Activated CD4-positive, alpha-beta T cell treated with anti-CD3 and anti-CD28 coated beads, Interleukin-2, amount 10 ng/mL, durations not matched to agents 24 days and 14 days (primary cell): ENCODE measurements at regions of chr14 and their contacts with region 1.

Region 1: GRCh38 chr14:89681086-89682018 is 264.3 kb upstream of the FOXN3 start:
- DNase-seq: peak; percentile 78
- H3K4me3 Mint-ChIP-seq: peak overlapping the region; percentile 80
- H3K27ac Mint-ChIP-seq: peak overlapping the region; percentile 90
- H3K4me1 Mint-ChIP-seq: peaks cover 30% of the 10 kb centered on the region
- H3K27me3 Mint-ChIP-seq: no peaks in the 10 kb centered on the region

Region 2: DNA sequence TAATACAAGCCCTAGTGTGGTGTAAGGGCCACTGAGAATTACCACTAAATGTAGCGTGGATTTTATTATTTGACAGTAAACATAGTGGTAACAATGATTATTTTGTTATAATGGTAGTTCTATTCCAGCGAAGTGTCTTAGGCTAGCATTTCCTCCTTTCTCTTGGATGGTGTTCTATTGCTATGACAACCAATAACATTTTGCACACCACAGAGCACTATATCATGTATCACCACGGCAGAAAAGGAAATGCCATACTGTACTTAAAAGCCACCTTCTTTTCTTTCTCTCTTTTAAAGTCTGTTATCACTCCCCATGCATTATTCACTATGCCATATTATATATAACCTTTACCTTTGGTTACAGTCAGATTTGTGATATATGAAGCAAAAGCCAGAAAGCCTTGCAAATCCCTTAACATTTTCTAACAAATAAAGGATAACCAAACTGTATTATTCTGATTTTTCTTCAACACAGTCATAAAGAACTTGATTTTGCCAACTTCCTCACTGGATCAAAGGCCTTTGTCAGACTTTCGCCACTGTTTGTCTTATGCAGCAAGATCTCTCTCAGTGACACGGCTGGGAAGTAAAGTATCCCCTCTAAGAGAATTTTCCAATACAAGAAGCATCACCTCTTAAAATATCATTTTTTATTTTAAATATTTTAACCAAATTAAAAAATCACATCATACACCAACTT is 460.1 kb before region 1 on chr14:
- intact Hi-C with region 1: no loop called
- DNase-seq: no peak
- H3K4me3 Mint-ChIP-seq: no peak overlapping the region
- H3K27ac Mint-ChIP-seq: peak overlapping the region; percentile 45
- H3K4me1 Mint-ChIP-seq: peaks cover 11% of the 10 kb centered on the region
- H3K27me3 Mint-ChIP-seq: no peaks in the 10 kb centered on the region

Region 3: DNA sequence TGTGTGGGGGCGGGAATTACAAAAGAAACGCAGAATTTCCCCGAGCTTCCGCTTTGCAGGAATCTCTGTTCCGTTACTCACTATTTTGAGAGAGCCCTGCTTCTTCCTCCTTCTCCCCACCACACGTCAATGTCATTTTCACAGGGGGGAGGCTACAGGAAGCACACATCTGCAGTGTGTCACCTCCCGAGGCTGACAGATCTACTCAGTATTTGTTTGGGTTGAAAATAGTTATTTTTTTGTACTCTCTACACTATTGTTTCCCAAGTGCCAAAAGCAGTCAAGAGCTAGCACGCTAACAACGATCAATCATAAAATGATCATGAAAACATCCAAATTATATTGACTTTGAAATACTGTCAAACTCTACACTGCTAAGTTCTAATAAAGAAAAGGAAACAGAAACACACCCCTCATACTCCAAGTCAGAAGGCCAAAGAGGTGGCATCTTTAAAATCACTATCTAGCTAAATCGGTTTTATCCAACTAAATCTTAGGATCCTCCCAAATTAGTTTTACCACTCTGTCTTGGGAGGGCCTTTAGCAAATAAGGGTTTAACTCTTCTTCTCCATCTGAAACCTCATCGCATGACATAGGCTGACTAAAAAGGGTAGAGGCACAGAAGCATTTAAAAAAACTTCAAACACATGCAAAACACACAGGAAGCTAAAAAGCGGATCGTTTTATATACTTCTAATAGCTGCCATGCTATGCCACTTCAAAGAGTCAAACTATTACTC is 316.1 kb before region 1 on chr14:
- intact Hi-C with region 1: loop called (anchors 2 kb)
- DNase-seq: peak; percentile 84
- H3K4me3 Mint-ChIP-seq: peak overlapping the region; percentile 80
- H3K27ac Mint-ChIP-seq: peak overlapping the region; percentile 92
- H3K4me1 Mint-ChIP-seq: peaks cover 38% of the 10 kb centered on the region
- H3K27me3 Mint-ChIP-seq: no peaks in the 10 kb centered on the region

Region 4: DNA sequence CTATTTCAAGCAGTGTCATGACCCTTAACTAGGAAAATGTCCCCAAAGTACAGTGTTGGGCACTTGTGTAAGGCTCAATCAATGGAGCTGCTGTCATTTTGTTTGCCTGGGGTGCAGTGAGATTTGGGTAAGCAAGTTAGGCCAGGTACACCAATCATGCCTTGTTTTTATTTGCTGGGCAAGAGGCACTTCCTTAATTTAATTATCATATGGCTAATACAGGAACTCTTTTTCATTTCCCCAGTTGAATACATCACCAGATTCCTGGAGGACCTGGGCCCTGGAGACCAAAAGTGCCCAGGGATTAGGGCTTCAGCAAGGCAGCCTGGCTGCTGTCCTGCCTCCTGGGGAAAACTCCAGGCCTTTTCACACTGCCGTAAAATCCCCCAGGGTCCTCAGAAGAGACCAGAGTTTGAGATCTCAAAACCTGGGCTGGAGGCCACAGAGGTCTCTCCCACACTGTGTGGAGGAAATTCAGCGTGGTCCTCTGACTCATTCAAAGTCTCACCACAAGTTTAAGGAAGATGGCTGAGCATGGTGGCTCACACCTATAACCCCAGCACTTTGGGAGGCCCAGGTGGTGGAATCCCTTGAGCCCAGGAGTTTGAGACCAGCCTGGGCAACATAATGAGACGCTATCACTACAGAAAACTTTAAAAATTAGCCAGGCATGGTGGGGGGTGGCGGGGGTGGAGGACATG is 235.9 kb before region 1 on chr14:
- intact Hi-C with region 1: loop called (anchors 1 kb)
- DNase-seq: peak; percentile 71
- H3K4me3 Mint-ChIP-seq: peak overlapping the region; percentile 55
- H3K27ac Mint-ChIP-seq: peak overlapping the region; percentile 85
- H3K4me1 Mint-ChIP-seq: peaks cover 44% of the 10 kb centered on the region
- H3K27me3 Mint-ChIP-seq: no peaks in the 10 kb centered on the region

Region 5: GRCh38 chr14:89641495-89642175 is 39.7 kb before region 1 on chr14:
- intact Hi-C with region 1: loop called (anchors 1 kb)
- DNase-seq: peak; percentile 86
- H3K4me3 Mint-ChIP-seq: peak overlapping the region; percentile 81
- H3K27ac Mint-ChIP-seq: peak overlapping the region; percentile 97
- H3K4me1 Mint-ChIP-seq: peaks cover 58% of the 10 kb centered on the region
- H3K27me3 Mint-ChIP-seq: no peaks in the 10 kb centered on the region

Region 6: DNA sequence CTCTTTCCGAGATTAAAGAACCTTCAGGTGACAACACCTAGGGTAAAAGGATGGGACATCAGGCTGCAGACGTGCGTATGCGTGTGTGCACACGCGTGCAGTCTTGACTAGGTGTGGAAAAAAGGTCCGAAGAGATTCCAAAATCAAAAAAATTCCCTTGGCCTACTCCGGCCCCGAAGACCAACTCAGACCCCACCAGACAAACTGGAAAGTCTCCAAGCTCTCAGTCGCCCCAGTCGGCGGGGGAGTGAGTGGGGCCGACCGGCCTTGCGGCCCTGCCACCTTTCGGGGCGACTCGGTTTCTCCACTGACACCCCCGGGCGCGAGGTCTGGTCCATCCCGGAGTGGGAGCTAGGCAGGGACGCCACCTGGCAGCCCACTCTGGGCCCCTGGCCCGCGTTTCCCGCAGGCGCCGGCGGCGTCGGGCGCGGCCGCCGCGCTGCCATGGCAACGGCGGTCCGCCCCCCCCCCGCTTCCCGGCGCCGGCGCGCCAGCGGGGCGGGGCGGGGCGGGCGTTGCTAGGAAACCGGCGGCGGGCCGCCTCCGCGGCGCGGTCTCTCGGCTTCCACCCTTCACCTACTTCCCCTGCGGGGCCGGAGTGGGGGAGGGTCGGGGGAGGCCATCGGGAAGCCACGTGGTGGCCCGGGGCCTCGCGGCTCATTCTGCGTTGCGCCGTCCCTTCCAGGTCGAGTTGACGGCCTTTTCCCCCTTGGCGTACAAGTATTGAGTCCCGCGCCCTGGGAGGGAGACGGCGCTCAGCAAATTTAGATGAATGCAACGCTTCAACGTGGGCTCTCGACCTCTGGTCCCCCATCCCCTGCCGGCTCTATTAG is 20.1 kb after region 1 on chr14:
- intact Hi-C with region 1: loop called (anchors 1 kb)
- DNase-seq: peak; percentile 95
- H3K4me3 Mint-ChIP-seq: peak overlapping the region; percentile 76
- H3K27ac Mint-ChIP-seq: peak overlapping the region; percentile 88
- H3K4me1 Mint-ChIP-seq: peaks cover 34% of the 10 kb centered on the region
- H3K27me3 Mint-ChIP-seq: no peaks in the 10 kb centered on the region

Region 7: DNA sequence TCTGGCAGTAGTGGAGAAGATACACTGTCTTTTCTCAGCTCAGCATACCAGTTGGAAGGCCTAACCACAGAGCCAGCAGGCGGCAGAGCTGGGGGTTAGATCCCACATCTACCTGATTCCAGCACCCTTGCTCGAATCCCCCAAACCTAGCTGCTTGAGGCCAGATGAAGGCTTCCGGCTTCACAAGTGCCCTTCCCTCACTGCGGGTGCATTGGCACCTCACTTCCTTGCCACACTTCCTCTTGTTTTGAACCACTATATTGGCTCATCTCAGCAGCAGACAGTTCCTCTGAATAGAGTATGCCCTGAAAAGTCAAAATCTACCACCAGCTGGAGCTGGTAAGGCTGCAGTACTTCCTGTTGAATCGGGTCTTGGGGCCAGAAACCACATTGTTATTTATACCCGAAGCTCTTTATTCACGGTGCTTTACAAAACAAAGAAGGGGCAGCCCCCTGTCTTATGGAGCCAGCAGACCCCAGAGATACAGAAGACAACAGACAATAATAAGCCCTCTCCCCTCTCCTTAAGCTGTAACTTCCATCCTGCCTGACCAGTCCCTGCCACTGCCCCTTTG is 39.5 kb after region 1 on chr14:
- intact Hi-C with region 1: loop called (anchors 1 kb)
- DNase-seq: peak; percentile 89
- H3K4me3 Mint-ChIP-seq: peak overlapping the region; percentile 68
- H3K27ac Mint-ChIP-seq: peak overlapping the region; percentile 91
- H3K4me1 Mint-ChIP-seq: peaks cover 57% of the 10 kb centered on the region
- H3K27me3 Mint-ChIP-seq: no peaks in the 10 kb centered on the region

Region 8: DNA sequence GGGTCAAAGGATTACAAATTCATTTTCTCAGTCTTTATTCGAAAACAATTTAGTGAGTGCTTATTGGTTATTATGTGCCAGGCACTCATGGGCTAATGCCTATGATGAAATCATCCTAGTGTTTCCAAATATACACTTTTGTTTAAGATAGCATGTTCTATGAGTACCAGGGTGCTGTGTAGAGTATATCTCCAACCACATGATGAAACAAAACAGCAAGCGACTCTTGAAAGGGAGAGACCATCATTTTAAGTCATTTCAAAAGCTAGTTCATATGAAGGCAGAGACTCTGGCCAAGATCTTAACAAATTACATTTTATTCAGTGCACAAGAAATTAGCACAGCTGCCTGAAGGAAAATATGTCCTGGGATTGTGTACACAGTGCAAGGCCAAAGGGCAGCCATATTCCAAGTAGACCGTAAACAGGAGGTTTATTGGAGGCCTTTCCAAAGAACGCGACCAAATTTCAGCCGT is 69.0 kb after region 1 on chr14:
- intact Hi-C with region 1: loop called (anchors 1 kb)
- DNase-seq: no peak
- H3K4me3 Mint-ChIP-seq: no peak overlapping the region
- H3K27ac Mint-ChIP-seq: peak overlapping the region; percentile 70
- H3K4me1 Mint-ChIP-seq: peaks cover 15% of the 10 kb centered on the region
- H3K27me3 Mint-ChIP-seq: no peaks in the 10 kb centered on the region

Region 9: DNA sequence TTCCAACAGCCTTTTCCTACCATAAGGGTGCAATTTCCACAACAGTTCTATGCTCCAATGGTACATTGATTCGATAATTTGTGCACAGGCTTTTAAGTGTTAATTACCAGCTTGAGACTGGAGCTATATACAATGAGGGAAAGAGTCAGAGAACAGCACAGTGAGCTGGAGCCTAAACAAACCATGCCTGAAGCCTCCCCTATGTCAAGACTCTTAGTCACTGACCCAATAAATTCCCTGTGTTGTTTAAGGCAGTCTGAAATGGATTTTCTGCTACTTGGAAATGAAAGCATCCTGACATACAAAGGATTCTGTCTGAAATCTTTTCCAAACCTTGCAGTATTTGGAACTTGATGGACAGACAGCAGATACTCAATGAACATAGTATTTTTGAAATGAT is 124.1 kb after region 1 on chr14:
- intact Hi-C with region 1: no loop called
- DNase-seq: no peak
- H3K4me3 Mint-ChIP-seq: no peak overlapping the region
- H3K27ac Mint-ChIP-seq: no peak overlapping the region
- H3K4me1 Mint-ChIP-seq: no peaks in the 10 kb centered on the region
- H3K27me3 Mint-ChIP-seq: peaks cover 5% of the 10 kb centered on the region

Region 10: DNA sequence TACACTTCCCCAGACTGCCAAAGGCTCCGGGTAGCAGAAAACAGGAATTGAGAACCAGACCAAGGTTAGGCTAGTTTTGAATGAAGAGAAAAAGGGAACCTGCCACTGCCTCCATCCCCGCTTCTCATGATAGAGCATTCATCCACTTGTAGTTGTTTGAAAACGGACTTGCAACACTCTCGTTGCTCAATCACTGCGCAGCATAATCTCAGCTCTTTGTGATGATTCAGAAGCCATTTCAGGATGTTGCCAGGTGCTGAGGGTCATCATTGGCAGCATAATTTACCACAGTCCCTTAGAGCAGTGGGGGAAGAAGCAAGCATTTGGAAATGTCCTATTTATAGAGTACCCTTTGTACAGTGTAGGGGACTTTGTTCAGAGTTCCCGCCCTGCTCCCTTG is 406.1 kb after region 1 on chr14:
- intact Hi-C with region 1: no loop called
- DNase-seq: no peak
- H3K4me3 Mint-ChIP-seq: no peak overlapping the region
- H3K27ac Mint-ChIP-seq: no peak overlapping the region
- H3K4me1 Mint-ChIP-seq: no peaks in the 10 kb centered on the region
- H3K27me3 Mint-ChIP-seq: peaks cover 28% of the 10 kb centered on the region